Activated B cell treated with CpG ODN at 0.5 μM for 24 hours (primary cell): ENCODE measurements at regions of chr20 and their contacts with region 1.

Region 1: GRCh38 chr20:58209652-58210397 is 18.6 kb downstream of the ANKRD60 start:
- DNase-seq: peak; percentile 88
- ATAC-seq: peak; percentile 96
- H3K4me3 Mint-ChIP-seq: peak overlapping the region; percentile 30
- H3K27ac Mint-ChIP-seq: no peak overlapping the region
- H3K4me1 Mint-ChIP-seq: peaks cover 4% of the 10 kb centered on the region
- H3K27me3 Mint-ChIP-seq: peaks cover 3% of the 10 kb centered on the region
- CTCF ChIP-seq: peak; percentile 99

Region 2: GRCh38 chr20:56554869-56555268 is 1655.0 kb before region 1 on chr20:
- CTCF ChIA-PET with region 1: interaction called, 5 read pairs
- POLR2A ChIA-PET with region 1: no interaction called
- intact Hi-C with region 1: loop called (anchors 1 kb)
- DNase-seq: no peak
- ATAC-seq: peak; percentile 40
- H3K4me3 Mint-ChIP-seq: no peak overlapping the region
- H3K27ac Mint-ChIP-seq: no peak overlapping the region
- H3K4me1 Mint-ChIP-seq: peaks cover 8% of the 10 kb centered on the region
- H3K27me3 Mint-ChIP-seq: peaks cover 2% of the 10 kb centered on the region
- CTCF ChIP-seq: no peak

Region 3: GRCh38 chr20:57089691-57090150 is 1120.1 kb before region 1 on chr20:
- CTCF ChIA-PET with region 1: no interaction called
- POLR2A ChIA-PET with region 1: no interaction called
- intact Hi-C with region 1: loop called (anchors 1 kb)
- DNase-seq: peak; percentile 31
- ATAC-seq: peak; percentile 47
- H3K4me3 Mint-ChIP-seq: no peak overlapping the region
- H3K27ac Mint-ChIP-seq: no peak overlapping the region
- H3K4me1 Mint-ChIP-seq: peaks cover 4% of the 10 kb centered on the region
- H3K27me3 Mint-ChIP-seq: peaks cover 7% of the 10 kb centered on the region
- CTCF ChIP-seq: no peak

Region 4: DNA sequence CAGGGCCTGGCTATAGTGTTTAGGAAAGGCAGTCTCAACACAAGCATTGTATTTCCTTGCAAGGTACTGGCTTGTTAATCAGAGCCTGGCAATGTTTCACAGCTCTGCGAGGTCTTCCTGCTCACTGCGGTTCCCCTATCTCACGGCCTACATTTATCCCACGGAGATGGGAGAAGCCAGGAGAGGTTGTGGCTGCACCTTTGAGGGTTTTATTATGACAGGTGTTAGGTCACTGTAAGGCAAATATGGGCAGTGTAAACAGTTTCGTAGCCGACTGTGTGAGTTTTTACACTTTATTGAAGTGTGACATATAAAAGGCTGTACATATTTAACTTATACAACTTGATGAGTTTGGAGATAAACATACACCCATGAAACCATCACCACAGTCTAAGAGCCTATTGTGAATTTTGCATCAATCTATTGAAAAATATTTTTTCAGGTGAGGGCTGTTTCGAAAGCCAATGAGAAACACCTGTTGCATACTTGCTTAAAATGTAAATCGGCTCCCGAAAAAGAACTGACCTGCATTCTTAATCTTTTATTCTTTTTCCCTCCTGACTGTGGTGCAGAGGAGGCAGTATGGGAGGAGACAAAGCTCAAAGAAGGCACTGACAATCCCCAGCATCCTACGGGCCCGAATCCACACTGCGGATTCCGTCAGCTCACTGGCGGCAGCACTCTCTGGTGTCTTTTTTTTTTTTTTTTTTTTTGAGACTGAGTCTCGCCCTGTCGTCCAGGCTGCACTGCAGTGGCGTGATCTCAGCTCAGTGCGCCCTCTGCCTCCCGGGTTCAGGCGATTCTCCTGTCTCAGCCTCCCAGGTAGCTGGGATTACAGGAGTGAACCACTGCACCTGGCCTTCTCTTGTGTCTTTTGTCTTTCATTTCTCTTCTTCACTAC is 826.1 kb before region 1 on chr20:
- CTCF ChIA-PET with region 1: interaction called, 4 read pairs
- POLR2A ChIA-PET with region 1: no interaction called
- intact Hi-C with region 1: loop called (anchors 2 kb)
- DNase-seq: no peak
- ATAC-seq: no peak
- H3K4me3 Mint-ChIP-seq: no peak overlapping the region
- H3K27ac Mint-ChIP-seq: no peak overlapping the region
- H3K4me1 Mint-ChIP-seq: peaks cover 17% of the 10 kb centered on the region
- H3K27me3 Mint-ChIP-seq: no peaks in the 10 kb centered on the region
- CTCF ChIP-seq: no peak

Region 5: GRCh38 chr20:57514273-57514751 is 695.5 kb before region 1 on chr20:
- CTCF ChIA-PET with region 1: interaction called, 3 read pairs
- POLR2A ChIA-PET with region 1: no interaction called
- intact Hi-C with region 1: loop called (anchors 1 kb)
- DNase-seq: no peak
- ATAC-seq: peak; percentile 31
- H3K4me3 Mint-ChIP-seq: no peak overlapping the region
- H3K27ac Mint-ChIP-seq: no peak overlapping the region
- H3K4me1 Mint-ChIP-seq: no peaks in the 10 kb centered on the region
- H3K27me3 Mint-ChIP-seq: peaks cover 7% of the 10 kb centered on the region
- CTCF ChIP-seq: no peak

Region 6: DNA sequence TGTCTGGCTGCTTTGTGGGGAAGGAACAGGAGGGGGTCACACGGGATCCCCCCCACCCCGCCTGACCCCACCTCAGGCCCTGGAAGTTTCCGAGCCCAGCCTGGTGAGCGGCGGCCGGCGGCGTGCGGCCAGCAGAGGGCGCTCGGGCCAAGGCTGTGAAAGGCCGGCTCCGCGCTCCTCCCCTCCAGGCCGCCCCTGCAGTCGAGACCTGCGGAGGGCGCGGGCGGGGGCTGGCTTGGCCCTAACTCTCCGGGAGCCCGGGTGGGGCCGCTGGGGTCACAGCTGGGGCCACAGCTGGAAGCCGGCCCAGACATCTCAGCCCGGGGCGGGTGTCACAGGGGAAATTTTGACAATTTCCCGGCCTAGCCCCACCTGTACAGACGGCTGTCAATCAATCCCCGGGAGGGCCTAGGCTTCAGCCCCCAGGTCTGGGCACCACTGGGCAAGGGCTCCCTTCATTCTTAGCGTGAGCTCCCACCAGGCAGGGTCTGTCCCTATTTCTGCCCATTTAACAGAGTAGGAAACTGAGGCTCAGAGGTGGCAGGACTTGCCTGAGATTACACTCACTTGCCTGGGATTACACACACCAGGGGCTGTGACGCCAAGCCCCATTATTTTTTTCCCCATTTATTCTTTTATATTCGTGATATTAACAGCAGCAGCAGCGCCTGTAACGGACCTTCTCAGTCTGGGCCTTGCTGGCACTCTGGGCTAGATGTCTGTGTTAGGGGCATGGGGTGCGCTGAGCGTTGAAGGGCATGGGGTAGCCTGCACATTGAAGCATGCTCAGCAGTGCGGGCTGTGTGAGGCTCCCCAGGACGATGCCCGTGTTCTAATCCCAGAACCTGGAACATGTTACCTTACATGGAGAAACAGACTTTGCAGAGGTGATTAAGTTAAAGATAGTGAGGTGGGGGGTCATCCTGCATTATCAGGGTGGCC is 612.6 kb before region 1 on chr20:
- CTCF ChIA-PET with region 1: interaction called, 8 read pairs
- POLR2A ChIA-PET with region 1: no interaction called
- intact Hi-C with region 1: loop called (anchors 1 kb)
- DNase-seq: peak; percentile 82
- ATAC-seq: peak; percentile 85
- H3K4me3 Mint-ChIP-seq: peak overlapping the region; percentile 42
- H3K27ac Mint-ChIP-seq: no peak overlapping the region
- H3K4me1 Mint-ChIP-seq: peaks cover 25% of the 10 kb centered on the region
- H3K27me3 Mint-ChIP-seq: peaks cover 18% of the 10 kb centered on the region
- CTCF ChIP-seq: peak; percentile 35

Region 7: DNA sequence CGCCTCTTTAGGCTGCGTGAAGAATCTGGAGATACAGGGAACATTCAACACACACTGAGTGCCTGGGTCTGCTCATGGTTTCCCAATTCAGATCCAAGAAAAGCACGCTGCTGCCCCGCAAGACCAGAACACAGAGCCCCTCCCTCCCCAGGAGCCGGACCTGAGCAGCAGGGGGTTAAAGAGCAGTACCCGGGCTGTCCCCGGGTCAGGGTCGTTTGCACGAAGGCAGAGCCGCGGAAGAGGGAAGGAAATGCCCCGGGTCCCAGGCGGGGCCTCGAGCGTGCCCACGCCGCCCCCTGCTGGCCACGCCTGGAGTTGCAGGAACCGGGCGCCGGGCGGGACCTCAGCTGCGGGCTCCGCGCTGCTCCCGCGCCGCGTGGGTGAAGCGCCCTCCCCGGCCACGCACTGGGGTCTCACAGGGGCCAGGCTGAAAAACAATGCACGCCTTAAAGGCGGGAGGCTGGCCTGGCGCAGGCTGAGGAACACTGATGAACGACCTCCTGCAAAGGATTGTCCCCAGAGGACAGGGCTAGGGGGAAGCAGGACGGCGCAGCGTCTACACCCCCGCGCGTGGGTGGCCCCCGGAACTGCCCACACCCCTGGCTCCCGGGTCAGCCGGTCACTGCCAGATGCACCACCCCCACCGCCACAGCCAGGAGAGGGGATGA is 30.3 kb before region 1 on chr20:
- CTCF ChIA-PET with region 1: no interaction called
- POLR2A ChIA-PET with region 1: no interaction called
- intact Hi-C with region 1: loop called (anchors 1 kb)
- DNase-seq: peak; percentile 75
- ATAC-seq: peak; percentile 96
- H3K4me3 Mint-ChIP-seq: no peak overlapping the region
- H3K27ac Mint-ChIP-seq: no peak overlapping the region
- H3K4me1 Mint-ChIP-seq: peaks cover 9% of the 10 kb centered on the region
- H3K27me3 Mint-ChIP-seq: peaks cover 36% of the 10 kb centered on the region
- CTCF ChIP-seq: peak; percentile 94